MCF 10A (cell line): ENCODE measurements at regions of chr9 and their contacts with region 1.

Region 1: DNA sequence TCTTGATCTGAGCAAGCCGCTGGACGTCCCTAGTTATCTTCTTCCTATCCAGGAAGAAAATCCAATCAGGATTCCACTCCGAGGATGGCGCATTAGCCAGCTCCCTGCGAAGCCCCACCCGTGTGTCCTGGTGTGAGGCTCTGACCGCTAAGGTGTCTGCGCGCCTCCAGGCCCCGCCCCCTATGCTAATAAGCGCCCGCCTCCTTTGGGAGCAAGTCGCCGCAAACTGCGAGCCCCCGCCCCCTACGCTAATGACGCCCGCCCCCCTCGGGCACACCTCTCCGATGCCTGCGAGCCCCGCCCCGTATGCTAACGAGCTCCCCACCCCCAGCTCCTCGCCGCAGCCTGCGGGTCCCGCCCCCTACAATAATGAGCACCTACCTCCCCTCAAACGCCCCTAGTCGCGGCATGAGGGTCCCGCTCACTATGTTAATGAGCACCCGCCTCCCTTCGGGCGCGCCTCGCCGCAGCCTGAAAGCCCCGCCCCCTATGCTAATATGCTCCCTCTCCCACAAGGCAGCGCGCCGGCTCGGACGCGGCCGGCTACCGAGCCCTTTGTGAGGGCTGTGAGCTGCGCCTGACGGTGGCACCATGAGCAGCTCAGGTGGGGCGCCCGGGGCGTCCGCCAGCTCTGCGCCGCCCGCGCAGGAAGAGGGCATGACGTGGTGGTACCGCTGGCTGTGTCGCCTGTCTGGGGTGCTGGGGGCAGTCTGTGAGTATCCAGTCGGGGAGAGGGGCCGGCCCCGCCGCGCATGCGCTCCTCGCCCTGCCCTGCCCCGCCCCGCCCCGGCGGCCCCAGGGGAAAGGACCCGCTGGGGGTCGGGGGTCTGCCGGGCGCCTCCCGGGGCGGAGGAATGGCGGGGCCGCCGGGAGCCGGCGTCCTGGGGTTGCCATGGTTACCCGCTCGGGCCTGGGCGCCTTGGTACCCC is at the start of gene CACFD1:
- DNase-seq: peak; percentile 93
- H3K4me3 Mint-ChIP-seq: peak within 1 kb of the TSS; percentile 92
- H3K27ac Mint-ChIP-seq: peak within 1 kb of the TSS; percentile 89
- H3K4me1 Mint-ChIP-seq: no peaks in the 10 kb centered on the region
- H3K27me3 Mint-ChIP-seq: no peaks in the 10 kb centered on the region
- CTCF ChIP-seq: no peak
- total RNA-seq, gene CACFD1: 1.5 and 3.4 TPM in 2 replicates

Region 2: GRCh38 chr9:133356391-133357091 is 103.2 kb before region 1 on chr9 and contains the starts of genes SURF1 and SURF2:
- CTCF ChIA-PET with region 1: interaction called, 3 read pairs
- POLR2A ChIA-PET with region 1: interaction called, 10 read pairs
- intact Hi-C with region 1: no loop called
- DNase-seq: peak; percentile 81
- H3K4me3 Mint-ChIP-seq: peak within 1 kb of the TSS; percentile 78
- H3K27ac Mint-ChIP-seq: peak within 1 kb of the TSS; percentile 74
- H3K4me1 Mint-ChIP-seq: peaks cover 14% of the 10 kb centered on the region
- H3K27me3 Mint-ChIP-seq: no peaks in the 10 kb centered on the region
- CTCF ChIP-seq: no peak
- total RNA-seq, gene SURF1: 30.8 and 31.2 TPM in 2 replicates
- total RNA-seq, gene SURF2: 28.2 and 39.5 TPM in 2 replicates

Region 3: GRCh38 chr9:133417541-133418461 is 41.9 kb before region 1 on chr9 and contains the start of gene REXO4:
- CTCF ChIA-PET with region 1: interaction called, 4 read pairs
- POLR2A ChIA-PET with region 1: interaction called, 16 read pairs
- intact Hi-C with region 1: no loop called
- DNase-seq: peak; percentile 84
- H3K4me3 Mint-ChIP-seq: peak within 1 kb of the TSS; percentile 90
- H3K27ac Mint-ChIP-seq: peak within 1 kb of the TSS; percentile 70
- H3K4me1 Mint-ChIP-seq: peaks cover 17% of the 10 kb centered on the region
- H3K27me3 Mint-ChIP-seq: no peaks in the 10 kb centered on the region
- CTCF ChIP-seq: no peak
- total RNA-seq, gene REXO4: 26.0 and 38.1 TPM in 2 replicates